GM10248 (cell line): ENCODE measurements at regions of chr6 and their contacts with region 1.

Region 1: GRCh38 chr6:30678964-30679726 is 6.3 kb upstream of the DHX16 start:
- DNase-seq: peak; percentile 84
- CTCF ChIP-seq: peak; percentile 99

Region 2: GRCh38 chr6:30647242-30648116 is 31.7 kb before region 1 on chr6:
- CTCF ChIA-PET with region 1: interaction called, 10 read pairs
- POLR2A ChIA-PET with region 1: no interaction called
- DNase-seq: peak; percentile 84
- CTCF ChIP-seq: no peak

Region 3: GRCh38 chr6:30656513-30656912 is 22.6 kb before region 1 on chr6:
- CTCF ChIA-PET with region 1: interaction called, 18 read pairs
- POLR2A ChIA-PET with region 1: no interaction called
- DNase-seq: no peak
- CTCF ChIP-seq: no peak

Region 4: DNA sequence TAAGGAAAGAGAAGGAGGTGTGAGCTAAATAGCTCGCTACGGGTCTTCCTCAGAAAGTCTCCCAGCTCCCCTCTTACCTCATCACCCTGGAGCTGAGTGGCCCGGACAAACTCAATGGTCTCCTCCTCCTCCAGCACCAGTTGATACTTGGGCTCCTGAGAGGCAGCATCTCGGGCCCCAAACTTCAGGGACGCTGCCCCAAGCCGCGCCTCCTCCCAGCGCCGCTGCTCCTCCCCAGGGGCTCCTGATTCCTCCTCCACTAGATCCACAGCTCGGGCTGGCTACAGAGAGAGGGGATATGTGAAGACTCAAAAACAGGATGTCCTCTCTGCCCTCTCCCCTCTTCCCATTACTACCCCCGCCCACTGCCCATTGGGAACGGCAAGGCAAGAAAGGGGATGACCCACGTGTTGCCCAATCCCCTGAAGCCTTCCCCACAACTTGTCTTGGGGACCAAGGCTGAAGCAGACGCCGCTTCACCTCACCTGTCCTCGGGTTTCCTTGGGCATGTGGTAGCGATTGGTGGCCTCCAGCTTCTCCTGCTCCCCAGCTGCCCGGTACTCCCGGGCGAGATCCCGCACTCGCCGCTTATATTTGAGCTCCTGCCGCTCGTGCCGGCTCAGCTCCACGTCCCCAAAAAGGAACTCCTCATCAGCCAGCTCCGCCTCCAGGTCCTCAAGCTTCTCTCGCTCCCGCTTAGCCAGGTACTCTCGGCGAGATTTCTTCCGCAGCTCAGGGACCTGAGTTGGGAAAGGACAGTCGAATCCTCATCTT is 14.0 kb before region 1 on chr6:
- CTCF ChIA-PET with region 1: interaction called, 29 read pairs
- POLR2A ChIA-PET with region 1: no interaction called
- DNase-seq: no peak
- CTCF ChIP-seq: no peak

Region 5: GRCh38 chr6:30707281-30707872 is 28.2 kb after region 1 on chr6:
- CTCF ChIA-PET with region 1: interaction called, 776 read pairs
- POLR2A ChIA-PET with region 1: interaction called, 7 read pairs
- DNase-seq: no peak
- CTCF ChIP-seq: no peak

Region 6: DNA sequence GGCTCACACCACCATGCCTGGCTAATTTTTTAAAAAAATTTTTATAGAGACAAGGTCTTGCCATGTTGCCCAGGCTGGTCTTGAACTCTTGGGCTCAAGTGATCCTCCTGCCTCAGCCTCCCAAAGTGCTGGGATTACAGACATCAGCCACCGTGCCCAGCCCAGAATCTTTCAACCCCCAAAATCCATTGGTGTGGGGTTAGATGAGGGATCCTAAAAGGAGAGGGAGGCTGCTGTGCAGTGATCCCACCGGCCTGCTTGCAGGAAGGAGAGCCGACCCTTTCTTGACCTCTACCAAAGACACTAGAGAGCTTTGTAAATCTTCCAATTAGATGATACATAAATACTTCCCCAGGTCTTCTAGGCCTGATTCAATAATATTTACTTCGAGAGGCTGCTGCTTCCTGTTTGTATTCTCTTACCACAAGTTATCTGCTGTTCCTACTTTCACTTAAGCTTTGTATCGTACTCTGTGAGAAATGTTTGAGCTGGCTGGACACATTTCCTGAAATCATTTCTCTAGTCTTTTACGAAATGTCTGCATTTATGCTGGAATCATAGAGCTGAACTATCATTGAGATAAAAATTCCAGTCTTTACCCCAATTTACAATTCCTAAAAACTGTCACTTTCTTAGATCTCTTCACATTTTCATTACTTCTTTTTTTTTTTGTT is 114.5 kb after region 1 on chr6:
- CTCF ChIA-PET with region 1: no interaction called
- POLR2A ChIA-PET with region 1: no interaction called
- DNase-seq: peak; percentile 74
- CTCF ChIP-seq: no peak